CD4-positive, alpha-beta memory T cell (primary cell): ENCODE measurements at regions of chr11 and their contacts with region 1.

Region 1: GRCh38 chr11:75388386-75389275 is 10.7 kb upstream of the RPS3 start:
- DNase-seq: peak; percentile 69 to 76 (median 74)
- H3K4me3 ChIP-seq: no peak overlapping the region
- H3K4me3 Mint-ChIP-seq: no peak overlapping the region
- H3K27ac ChIP-seq: no peak overlapping the region
- H3K27ac Mint-ChIP-seq: no peak overlapping the region
- H3K4me1 ChIP-seq: peaks cover 17% of the 10 kb centered on the region
- H3K4me1 Mint-ChIP-seq: peaks cover 4 to 13% (median 7%) of the 10 kb centered on the region in 4 donors
- H3K27me3 ChIP-seq: no peaks in the 10 kb centered on the region
- H3K27me3 Mint-ChIP-seq: peaks cover 4% of the 10 kb centered on the region in 2 donors

Region 2: DNA sequence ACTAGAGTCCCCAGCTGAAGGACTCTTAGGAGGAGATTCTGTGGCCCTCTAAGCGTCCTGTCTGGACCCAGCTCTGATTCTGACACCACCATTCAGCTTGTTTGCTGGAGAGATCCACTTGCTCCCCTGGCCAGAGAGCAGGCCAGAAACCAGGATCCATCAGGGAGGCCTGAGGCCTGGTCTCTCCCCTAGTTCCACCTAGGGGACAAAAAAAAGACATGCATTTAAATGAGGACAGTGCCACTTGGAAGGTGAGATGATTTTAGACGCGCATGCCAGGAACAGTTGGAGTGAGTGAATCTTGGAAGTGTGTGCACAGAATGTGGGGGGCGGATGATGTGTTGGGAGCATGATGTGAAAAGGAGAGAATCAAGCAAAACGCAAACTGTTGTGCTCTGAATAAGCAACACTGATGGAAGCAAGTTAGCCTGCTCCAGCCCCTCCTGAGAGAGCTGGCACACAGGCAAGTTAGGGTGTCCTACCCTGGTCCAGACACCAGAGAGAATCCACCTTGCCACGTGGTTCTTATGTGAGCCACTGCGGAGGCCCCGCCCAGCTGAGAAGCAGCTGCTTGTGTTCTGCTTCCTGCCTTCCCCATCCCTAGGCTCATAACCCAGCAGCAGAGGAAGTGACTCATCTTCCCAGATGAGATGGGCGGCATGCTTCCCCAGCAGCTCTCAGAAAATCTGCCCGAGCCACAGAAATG is 245.8 kb before region 1 on chr11:
- CTCF ChIA-PET with region 1: interaction called, 4 read pairs
- POLR2A ChIA-PET with region 1: no interaction called
- intact Hi-C with region 1: loop called (anchors 5 kb)
- DNase-seq: peak; percentile 44 to 88 (median 57)
- H3K4me3 ChIP-seq: no peak overlapping the region
- H3K4me3 Mint-ChIP-seq: peak overlapping the region in 7 of 8 donors; percentile 58 to 75 (median 73)
- H3K27ac ChIP-seq: peak overlapping the region; percentile 22
- H3K27ac Mint-ChIP-seq: peak overlapping the region; percentile 45 to 93 (median 89)
- H3K4me1 ChIP-seq: peaks cover 37% of the 10 kb centered on the region
- H3K4me1 Mint-ChIP-seq: peaks cover 25 to 40% (median 34%) of the 10 kb centered on the region in 4 donors
- H3K27me3 ChIP-seq: no peaks in the 10 kb centered on the region
- H3K27me3 Mint-ChIP-seq: peaks cover 0 to 1% of the 10 kb centered on the region in 2 donors

Region 3: GRCh38 chr11:75280227-75280701 is 108.4 kb before region 1 on chr11:
- CTCF ChIA-PET with region 1: interaction called, 614 read pairs
- POLR2A ChIA-PET with region 1: interaction called, 118 read pairs
- intact Hi-C with region 1: loop called (anchors 1 kb)
- DNase-seq: peak; percentile 57 to 74 (median 69)
- H3K4me3 ChIP-seq: no peak overlapping the region
- H3K4me3 Mint-ChIP-seq: peak overlapping the region in 2 of 8 donors; percentile 53 to 54
- H3K27ac ChIP-seq: no peak overlapping the region
- H3K27ac Mint-ChIP-seq: peak overlapping the region; percentile 68 to 95 (median 91)
- H3K4me1 ChIP-seq: peaks cover 37% of the 10 kb centered on the region
- H3K4me1 Mint-ChIP-seq: peaks cover 33 to 50% (median 43%) of the 10 kb centered on the region in 4 donors
- H3K27me3 ChIP-seq: no peaks in the 10 kb centered on the region
- H3K27me3 Mint-ChIP-seq: no peaks in the 10 kb centered on the region

Region 4: DNA sequence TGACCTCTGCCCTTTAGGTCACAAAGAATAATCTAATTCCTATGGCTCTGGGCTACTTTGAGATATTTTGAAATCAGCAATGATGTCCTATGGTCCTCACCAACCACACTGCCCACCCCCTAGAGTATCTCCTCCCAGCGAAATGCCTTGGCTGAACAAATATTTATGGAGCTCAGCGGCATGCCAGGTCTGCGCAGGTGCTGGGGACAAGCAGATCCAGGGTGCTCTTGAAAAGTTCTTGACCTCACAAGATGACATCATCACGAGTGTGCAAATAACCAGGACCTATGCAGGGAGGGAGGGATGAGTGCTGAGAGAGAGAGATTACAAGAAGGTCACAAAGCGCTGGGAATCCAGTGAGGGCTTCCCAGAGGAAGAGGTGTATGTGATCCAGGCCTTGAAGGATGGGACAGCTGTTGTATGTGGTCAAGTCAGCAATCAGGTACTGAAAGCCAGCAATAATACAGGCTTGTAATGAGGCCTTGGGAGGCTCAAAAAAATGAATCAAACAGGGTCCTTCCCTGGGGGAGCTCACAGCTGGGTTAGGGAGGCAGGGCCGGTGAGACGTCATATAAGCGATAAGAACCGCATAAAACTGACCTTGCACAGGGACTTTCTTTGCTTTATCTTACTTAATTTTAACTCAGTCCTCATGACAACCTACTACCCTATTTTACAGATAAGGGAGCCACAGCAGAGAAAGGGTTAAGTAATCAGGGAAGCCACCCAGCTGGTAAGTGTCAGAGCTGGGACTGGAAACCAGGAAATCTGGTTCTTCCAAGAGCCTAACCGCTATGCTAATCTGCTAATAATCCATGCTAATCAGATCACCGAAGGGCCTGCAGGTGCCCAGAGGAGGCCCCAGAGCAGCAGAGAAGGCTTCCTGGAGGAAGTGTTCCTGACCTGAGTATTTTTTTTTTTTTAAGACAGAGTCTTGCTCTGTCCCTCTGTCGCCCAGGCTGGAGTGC is 45.4 kb before region 1 on chr11:
- CTCF ChIA-PET with region 1: interaction called, 43 read pairs
- POLR2A ChIA-PET with region 1: no interaction called
- intact Hi-C with region 1: no loop called
- DNase-seq: no peak
- H3K4me3 ChIP-seq: no peak overlapping the region
- H3K4me3 Mint-ChIP-seq: peak overlapping the region in 2 of 8 donors; percentile 13 to 31
- H3K27ac ChIP-seq: no peak overlapping the region
- H3K27ac Mint-ChIP-seq: peak overlapping the region; percentile 63 to 93 (median 90)
- H3K4me1 ChIP-seq: peaks cover 98% of the 10 kb centered on the region
- H3K4me1 Mint-ChIP-seq: peaks cover 56 to 100% (median 81%) of the 10 kb centered on the region in 4 donors
- H3K27me3 ChIP-seq: no peaks in the 10 kb centered on the region
- H3K27me3 Mint-ChIP-seq: no peaks in the 10 kb centered on the region

Region 5: GRCh38 chr11:75399344-75400145 is 10.9 kb after region 1 on chr11 and contains the start of gene RPS3:
- CTCF ChIA-PET with region 1: interaction called, 45 read pairs
- POLR2A ChIA-PET with region 1: interaction called, 4 read pairs
- intact Hi-C with region 1: loop called (anchors 1 kb)
- DNase-seq: peak; percentile 87 to 89 (median 88)
- H3K4me3 ChIP-seq: peak within 1 kb of the TSS; percentile 71 to 93
- H3K4me3 Mint-ChIP-seq: peak within 1 kb of the TSS; percentile 88 to 98 (median 96)
- H3K27ac ChIP-seq: peak within 1 kb of the TSS; percentile 83
- H3K27ac Mint-ChIP-seq: peak within 1 kb of the TSS; percentile 96 to 99 (median 98)
- H3K4me1 ChIP-seq: peaks cover 38% of the 10 kb centered on the region
- H3K4me1 Mint-ChIP-seq: peaks cover 31 to 55% (median 40%) of the 10 kb centered on the region in 4 donors
- H3K27me3 ChIP-seq: no peaks in the 10 kb centered on the region
- H3K27me3 Mint-ChIP-seq: peaks cover 0 to 1% of the 10 kb centered on the region in 2 donors
- total RNA-seq, gene RPS3: 4,846 to 5,053 TPM

Region 6: GRCh38 chr11:75445315-75445953 is 56.8 kb after region 1 on chr11:
- CTCF ChIA-PET with region 1: interaction called, 36 read pairs
- POLR2A ChIA-PET with region 1: no interaction called
- intact Hi-C with region 1: loop called (anchors 1 kb)
- DNase-seq: peak; percentile 54 to 72 (median 63)
- H3K4me3 ChIP-seq: no peak overlapping the region
- H3K4me3 Mint-ChIP-seq: no peak overlapping the region
- H3K27ac ChIP-seq: no peak overlapping the region
- H3K27ac Mint-ChIP-seq: peak overlapping the region in 3 of 7 donors; percentile 29 to 45 (median 29)
- H3K4me1 ChIP-seq: peaks cover 5% of the 10 kb centered on the region
- H3K4me1 Mint-ChIP-seq: peaks cover 0 to 7% (median 3%) of the 10 kb centered on the region in 4 donors
- H3K27me3 ChIP-seq: no peaks in the 10 kb centered on the region
- H3K27me3 Mint-ChIP-seq: no peaks in the 10 kb centered on the region

Region 7: GRCh38 chr11:75562048-75562835 is 173.6 kb after region 1 on chr11 and contains the start of gene SERPINH1:
- CTCF ChIA-PET with region 1: no interaction called
- POLR2A ChIA-PET with region 1: no interaction called
- intact Hi-C with region 1: no loop called
- DNase-seq: peak; percentile 43 to 67 (median 49)
- H3K4me3 ChIP-seq: peak within 1 kb of the TSS; percentile 86 to 96
- H3K4me3 Mint-ChIP-seq: peak within 1 kb of the TSS; percentile 93 to 99 (median 99)
- H3K27ac ChIP-seq: peak within 1 kb of the TSS; percentile 71
- H3K27ac Mint-ChIP-seq: peak within 1 kb of the TSS; percentile 91 to 98 (median 96)
- H3K4me1 ChIP-seq: peaks cover 20% of the 10 kb centered on the region
- H3K4me1 Mint-ChIP-seq: peaks cover 12 to 49% (median 33%) of the 10 kb centered on the region in 4 donors
- H3K27me3 ChIP-seq: no peaks in the 10 kb centered on the region
- H3K27me3 Mint-ChIP-seq: no peaks in the 10 kb centered on the region
- total RNA-seq, gene SERPINH1: 15.6 to 16.2 TPM

Region 8: DNA sequence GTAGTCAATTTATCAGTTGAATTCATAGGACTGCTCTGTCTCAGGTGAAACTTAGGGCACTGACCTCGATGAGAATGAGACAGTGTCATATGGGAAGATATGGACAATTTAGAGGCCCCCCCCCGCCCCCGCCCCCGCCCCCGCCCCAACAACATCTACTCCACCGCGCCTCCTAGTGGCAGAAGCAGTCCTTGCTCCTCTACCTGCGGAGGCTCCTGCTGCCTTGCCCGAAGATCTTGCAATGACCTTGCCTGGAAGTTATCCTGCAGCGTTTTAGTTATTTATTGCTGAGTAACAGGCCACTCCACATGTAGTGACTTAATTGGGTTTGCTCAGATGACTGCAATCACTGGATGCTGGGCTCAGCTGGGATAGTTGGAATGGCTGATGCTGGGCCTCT is 188.6 kb after region 1 on chr11:
- CTCF ChIA-PET with region 1: interaction called, 23 read pairs
- POLR2A ChIA-PET with region 1: no interaction called
- intact Hi-C with region 1: loop called (anchors 1 kb)
- DNase-seq: peak; percentile 37 to 60 (median 48)
- H3K4me3 ChIP-seq: no peak overlapping the region
- H3K4me3 Mint-ChIP-seq: no peak overlapping the region
- H3K27ac ChIP-seq: no peak overlapping the region
- H3K27ac Mint-ChIP-seq: no peak overlapping the region
- H3K4me1 ChIP-seq: peaks cover 2% of the 10 kb centered on the region
- H3K4me1 Mint-ChIP-seq: peaks cover 2 to 4% (median 2%) of the 10 kb centered on the region in 4 donors
- H3K27me3 ChIP-seq: no peaks in the 10 kb centered on the region
- H3K27me3 Mint-ChIP-seq: peaks cover 0 to 2% of the 10 kb centered on the region in 2 donors